ENCODE measurements at regions of chr9 and their contacts with region 1.

Region 1: GRCh38 chr9:132798817-132799790 is 79.0 kb downstream of the AK8 start:
- DNase-seq: no peak
- H3K4me3 ChIP-seq: no peak overlapping the region
- H3K27ac ChIP-seq: no peak overlapping the region
- H3K4me1 ChIP-seq: no peaks in the 10 kb centered on the region
- H3K27me3 ChIP-seq: no peaks in the 10 kb centered on the region
- CTCF ChIP-seq: no peak
- POLR2A ChIP-seq: no peak

Region 2: DNA sequence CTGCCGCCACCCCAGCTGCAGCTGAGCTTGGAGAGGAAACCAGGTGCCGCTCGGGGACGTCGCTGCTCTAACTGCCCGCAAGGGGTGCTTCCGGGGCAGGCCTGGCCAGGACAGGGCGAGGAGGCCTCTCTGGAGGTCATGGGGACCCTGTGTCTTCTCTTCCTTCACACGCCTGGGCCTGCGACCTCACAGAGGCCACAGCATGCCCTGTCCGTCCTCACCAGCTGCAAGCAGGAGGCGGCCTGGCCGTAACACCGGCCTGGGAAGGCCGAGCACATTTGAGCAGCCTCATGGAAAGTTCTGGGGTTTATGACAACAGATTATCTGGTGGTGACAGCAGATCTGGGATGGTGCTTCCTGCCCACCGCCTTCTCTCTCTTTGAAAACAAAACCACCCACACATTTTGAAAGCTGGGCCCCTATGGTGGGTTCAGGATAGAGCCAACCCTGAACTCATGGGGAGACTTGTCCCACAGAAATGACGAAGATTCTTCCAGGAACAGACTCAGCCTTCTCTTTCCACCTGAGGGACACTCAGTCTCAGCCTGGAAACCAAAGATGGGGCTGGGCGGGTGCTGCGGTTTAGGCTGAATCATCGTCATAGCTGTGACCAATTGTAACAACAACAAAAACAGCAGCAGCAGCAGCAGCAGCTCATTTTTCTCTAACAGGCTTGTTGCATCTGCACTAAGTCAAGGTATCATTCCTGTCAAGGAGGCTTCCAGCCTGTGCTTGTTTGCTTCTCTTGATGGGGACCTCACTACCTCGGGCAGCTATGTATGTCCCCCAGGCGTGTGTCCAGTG is 959.6 kb before region 1 on chr9:
- intact Hi-C with region 1: no loop called
- DNase-seq: no peak
- H3K4me3 ChIP-seq: no peak overlapping the region
- H3K27ac ChIP-seq: no peak overlapping the region
- H3K4me1 ChIP-seq: no peaks in the 10 kb centered on the region
- H3K27me3 ChIP-seq: peaks cover 0 to 16% of the 10 kb centered on the region in 2 donors
- CTCF ChIP-seq: no peak
- POLR2A ChIP-seq: no peak

Region 3: GRCh38 chr9:132324425-132324824 is 474.7 kb before region 1 on chr9:
- intact Hi-C with region 1: no loop called
- DNase-seq: no peak
- H3K4me3 ChIP-seq: no peak overlapping the region
- H3K27ac ChIP-seq: no peak overlapping the region
- H3K4me1 ChIP-seq: no peaks in the 10 kb centered on the region
- H3K27me3 ChIP-seq: no peaks in the 10 kb centered on the region
- CTCF ChIP-seq: no peak
- POLR2A ChIP-seq: no peak

Region 4: GRCh38 chr9:132406554-132407122 is 392.5 kb before region 1 on chr9 and contains the start of gene TTF1:
- intact Hi-C with region 1: loop called (anchors 10 kb)
- DNase-seq: peak; percentile 80 to 86
- H3K4me3 ChIP-seq: peak within 1 kb of the TSS; percentile 66 to 79 (median 72)
- H3K27ac ChIP-seq: peak within 1 kb of the TSS; percentile 26 to 36
- H3K4me1 ChIP-seq: peaks cover 0 to 13% of the 10 kb centered on the region in 2 donors
- H3K27me3 ChIP-seq: peaks cover 0 to 19% of the 10 kb centered on the region in 2 donors
- CTCF ChIP-seq: no peak
- POLR2A ChIP-seq: peak; percentile 20
- total RNA-seq, gene TTF1: 11.2 to 18.0 (median 16.8) TPM

Region 5: GRCh38 chr9:132509928-132510874 is 288.9 kb before region 1 on chr9:
- intact Hi-C with region 1: loop called (anchors 10 kb)
- DNase-seq: no peak
- H3K4me3 ChIP-seq: no peak overlapping the region
- H3K27ac ChIP-seq: no peak overlapping the region
- H3K4me1 ChIP-seq: no peaks in the 10 kb centered on the region
- H3K27me3 ChIP-seq: peaks cover 0 to 22% of the 10 kb centered on the region in 2 donors
- CTCF ChIP-seq: no peak
- POLR2A ChIP-seq: no peak

Region 6: DNA sequence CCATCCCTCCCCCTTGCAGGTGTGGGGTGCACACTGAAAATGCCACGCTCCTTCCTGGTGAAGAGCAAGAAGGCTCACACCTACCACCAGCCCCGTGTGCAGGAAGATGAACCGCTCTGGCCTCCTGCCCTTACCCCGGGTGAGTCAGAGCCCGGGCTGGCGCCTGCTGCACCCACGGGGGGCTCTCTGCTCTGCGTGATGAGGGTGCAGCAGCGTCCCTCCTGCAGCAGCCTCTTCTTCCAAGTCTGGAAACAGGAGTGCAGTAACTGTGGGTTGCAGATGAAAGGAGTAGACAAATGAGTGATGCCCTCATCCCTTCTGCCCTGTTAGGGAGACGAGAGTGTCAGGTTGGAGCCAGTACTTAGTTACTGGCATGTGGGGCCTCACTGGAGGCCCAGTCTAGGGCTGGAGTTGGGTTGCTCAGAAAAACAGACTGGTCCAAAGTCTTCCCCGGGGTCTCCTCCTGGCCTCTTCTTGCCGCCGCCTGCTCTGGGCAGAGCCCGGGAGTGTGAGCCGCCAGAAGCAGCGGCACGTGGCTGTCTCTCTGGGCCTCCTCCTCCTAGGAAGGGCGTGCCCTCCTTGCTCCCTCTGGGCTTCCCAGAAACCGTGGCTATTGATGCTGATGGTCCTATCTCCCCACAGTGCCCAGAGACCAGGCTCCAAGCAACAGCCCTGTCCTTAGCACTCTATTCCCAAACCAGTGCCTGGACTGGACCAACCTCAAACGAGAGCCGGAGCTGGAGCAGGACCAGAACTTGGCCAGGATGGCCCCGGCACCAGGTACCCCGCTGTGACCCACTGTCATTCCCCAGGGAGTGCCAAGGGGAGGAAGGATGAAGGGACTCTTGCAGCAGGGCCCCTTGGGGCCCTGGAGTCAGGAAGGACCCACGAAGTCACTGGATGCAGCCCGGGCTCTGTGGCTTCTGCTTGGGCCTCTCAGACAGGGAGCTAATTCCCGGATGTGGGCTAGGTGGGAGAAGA is 187.8 kb after region 1 on chr9:
- intact Hi-C with region 1: no loop called
- DNase-seq: no peak
- H3K4me3 ChIP-seq: no peak overlapping the region
- H3K27ac ChIP-seq: no peak overlapping the region
- H3K4me1 ChIP-seq: no peaks in the 10 kb centered on the region
- H3K27me3 ChIP-seq: peaks cover 0 to 30% of the 10 kb centered on the region in 2 donors
- CTCF ChIP-seq: no peak
- POLR2A ChIP-seq: no peak

Region 7: GRCh38 chr9:134570151-134570621 is 1771.1 kb after region 1 on chr9:
- intact Hi-C with region 1: no loop called
- DNase-seq: peak in 1 of 2 donors; percentile 30
- H3K4me3 ChIP-seq: no peak overlapping the region
- H3K27ac ChIP-seq: no peak overlapping the region
- H3K4me1 ChIP-seq: no peaks in the 10 kb centered on the region
- H3K27me3 ChIP-seq: no peaks in the 10 kb centered on the region
- CTCF ChIP-seq: no peak
- POLR2A ChIP-seq: no peak